ENCODE measurements at regions of chr11 and their contacts with region 1.

Region 1: GRCh38 chr11:113113801-113114706 is 152.8 kb downstream of the NCAM1 start:
- DNase-seq: peak; percentile 43 to 59
- ATAC-seq: peak; percentile 89 to 95 (median 92)
- H3K4me3 ChIP-seq: no peak overlapping the region
- H3K27ac ChIP-seq: peak overlapping the region in 9 of 10 donors; percentile 25 to 71 (median 51)
- H3K4me1 ChIP-seq: peaks cover under 1 to 74% (median 25%) of the 10 kb centered on the region in 9 donors
- H3K27me3 ChIP-seq: peaks cover 0 to 2% (median 0%) of the 10 kb centered on the region in 7 donors
- CTCF ChIP-seq: peak; percentile 41 to 80 (median 68)

Region 2: DNA sequence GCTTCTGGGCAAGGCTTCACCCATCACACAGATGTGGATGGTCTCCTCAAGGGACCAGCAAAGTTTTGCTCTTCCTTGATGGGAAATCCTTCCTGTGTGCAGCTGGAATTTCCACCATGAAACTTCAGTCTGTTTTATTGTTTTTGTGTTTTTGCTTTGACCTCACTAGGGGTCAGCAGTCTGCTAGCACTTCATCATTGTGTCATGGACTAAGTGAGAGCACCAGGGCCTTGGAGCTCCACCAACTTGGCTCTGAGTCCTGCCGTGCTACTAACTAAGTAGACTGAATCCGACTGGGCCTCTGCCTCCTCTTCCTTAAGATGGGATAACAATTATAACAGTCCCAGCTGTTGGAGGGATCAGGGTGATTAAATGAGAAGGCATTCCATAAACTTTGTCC is 458.7 kb before region 1 on chr11:
- intact Hi-C with region 1: loop called in 4 of 10 experiments (anchors 10 kb)
- DNase-seq: peak; percentile 74 to 87
- ATAC-seq: peak; percentile 55 to 87 (median 84)
- H3K4me3 ChIP-seq: no peak overlapping the region
- H3K27ac ChIP-seq: peak overlapping the region in 7 of 10 donors; percentile 17 to 72 (median 48)
- H3K4me1 ChIP-seq: peaks cover 8 to 67% (median 22%) of the 10 kb centered on the region in 9 donors
- H3K27me3 ChIP-seq: no peaks in the 10 kb centered on the region
- CTCF ChIP-seq: peak in 6 of 9 donors; percentile 8 to 47 (median 29)

Region 3: GRCh38 chr11:112777283-112777751 is 336.7 kb before region 1 on chr11:
- intact Hi-C with region 1: loop called in 2 of 10 experiments (anchors 10 kb)
- DNase-seq: no peak
- ATAC-seq: peak in 7 of 8 donors; percentile 2 to 65 (median 25)
- H3K4me3 ChIP-seq: no peak overlapping the region
- H3K27ac ChIP-seq: peak overlapping the region; percentile 47 to 86 (median 76)
- H3K4me1 ChIP-seq: peaks cover 10 to 50% (median 33%) of the 10 kb centered on the region in 9 donors
- H3K27me3 ChIP-seq: peaks cover 0 to 11% (median 0%) of the 10 kb centered on the region in 7 donors
- CTCF ChIP-seq: no peak

Region 4: DNA sequence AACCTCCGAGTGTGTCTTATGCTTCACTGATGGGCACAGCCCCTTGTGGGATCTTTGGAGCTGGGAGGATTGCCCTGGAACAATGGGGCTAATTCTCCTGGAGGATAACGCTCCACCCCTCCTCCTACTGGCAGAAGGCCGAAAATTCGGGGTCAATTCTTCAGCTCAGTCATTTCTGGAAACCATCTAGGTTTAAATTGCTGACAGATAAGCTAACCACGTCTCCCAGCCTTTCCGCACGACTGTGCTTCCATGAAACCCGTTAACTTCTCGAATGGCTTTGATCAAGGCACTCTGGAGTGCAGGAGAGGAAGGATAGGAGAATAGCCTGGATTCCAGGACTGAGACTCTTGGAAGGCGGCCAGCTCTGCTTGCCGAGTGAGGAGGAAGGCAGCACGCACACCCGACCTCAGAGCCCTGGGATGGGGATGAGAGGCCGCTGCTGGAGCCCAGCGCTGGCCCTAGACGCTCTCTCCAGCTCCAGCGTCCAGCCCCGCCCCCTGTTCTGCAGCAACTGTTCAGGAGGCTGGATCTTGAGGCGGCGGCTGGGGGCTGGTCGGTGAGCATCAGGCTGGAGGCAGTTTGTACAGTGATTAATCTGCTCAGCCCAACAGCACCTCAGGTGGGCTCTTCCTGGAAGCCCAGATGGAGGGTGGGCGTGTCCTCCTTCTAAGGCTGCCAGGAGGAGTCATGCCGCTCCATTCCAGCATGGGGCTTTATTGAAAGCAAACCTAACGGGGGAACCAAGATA is 329.6 kb before region 1 on chr11:
- intact Hi-C with region 1: loop called in 2 of 10 experiments (anchors 10 kb)
- DNase-seq: peak; percentile 67 to 68
- ATAC-seq: peak; percentile 61 to 88 (median 79)
- H3K4me3 ChIP-seq: peak overlapping the region in 8 of 10 donors; percentile 4 to 37 (median 22)
- H3K27ac ChIP-seq: peak overlapping the region; percentile 31 to 87 (median 70)
- H3K4me1 ChIP-seq: peaks cover 17 to 52% (median 45%) of the 10 kb centered on the region in 9 donors
- H3K27me3 ChIP-seq: peaks cover 0 to 5% (median 0%) of the 10 kb centered on the region in 7 donors
- CTCF ChIP-seq: peak in 1 of 9 donors; percentile 7

Region 5: GRCh38 chr11:112795142-112795815 is 318.8 kb before region 1 on chr11:
- intact Hi-C with region 1: loop called in 1 of 10 experiments (anchors 10 kb)
- DNase-seq: no peak
- ATAC-seq: peak in 5 of 8 donors; percentile 8 to 72 (median 41)
- H3K4me3 ChIP-seq: no peak overlapping the region
- H3K27ac ChIP-seq: peak overlapping the region in 2 of 10 donors; percentile 62
- H3K4me1 ChIP-seq: peaks cover 0 to 41% (median 12%) of the 10 kb centered on the region in 9 donors
- H3K27me3 ChIP-seq: no peaks in the 10 kb centered on the region
- CTCF ChIP-seq: peak; percentile 11 to 61 (median 51)

Region 6: DNA sequence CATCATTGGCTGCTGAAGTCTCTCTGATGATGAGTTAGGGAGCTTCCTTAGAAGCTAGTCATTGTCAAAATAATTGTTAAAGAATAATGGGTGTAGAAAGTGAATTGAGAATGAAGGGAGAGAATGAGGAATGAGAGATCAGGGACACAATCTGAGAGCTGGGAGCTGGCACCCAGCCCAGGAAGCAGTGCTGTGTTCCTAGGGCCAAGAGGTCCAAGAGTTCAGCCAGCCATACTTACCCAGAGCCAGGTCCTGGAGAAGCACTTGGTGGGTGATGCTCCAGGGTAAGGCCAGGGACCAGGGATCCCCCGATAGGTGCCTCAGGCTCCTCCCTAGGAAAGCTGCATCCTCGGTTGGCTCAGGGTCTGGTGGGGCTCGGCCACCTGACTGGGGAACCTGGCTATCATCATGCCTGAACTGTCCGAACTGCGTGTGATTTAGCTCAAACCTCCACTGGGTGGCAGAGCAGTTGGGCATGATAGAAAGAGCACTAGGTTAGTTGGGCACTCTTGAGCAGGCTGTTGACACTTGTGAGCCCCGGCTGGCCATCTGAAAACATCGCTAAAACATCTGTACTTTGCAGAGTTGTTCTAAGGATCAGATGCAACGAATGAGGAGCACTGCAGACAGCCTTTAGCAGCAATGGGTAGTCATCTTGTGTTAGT is 276.8 kb before region 1 on chr11:
- intact Hi-C with region 1: loop called in 2 of 10 experiments (anchors 10 kb)
- DNase-seq: peak; percentile 10 to 45
- ATAC-seq: peak; percentile 49 to 65 (median 63)
- H3K4me3 ChIP-seq: no peak overlapping the region
- H3K27ac ChIP-seq: peak overlapping the region in 1 of 10 donors; percentile 19
- H3K4me1 ChIP-seq: peaks cover 0 to 24% (median 10%) of the 10 kb centered on the region in 9 donors
- H3K27me3 ChIP-seq: no peaks in the 10 kb centered on the region
- CTCF ChIP-seq: peak in 7 of 9 donors; percentile 25 to 58 (median 43)

Region 7: DNA sequence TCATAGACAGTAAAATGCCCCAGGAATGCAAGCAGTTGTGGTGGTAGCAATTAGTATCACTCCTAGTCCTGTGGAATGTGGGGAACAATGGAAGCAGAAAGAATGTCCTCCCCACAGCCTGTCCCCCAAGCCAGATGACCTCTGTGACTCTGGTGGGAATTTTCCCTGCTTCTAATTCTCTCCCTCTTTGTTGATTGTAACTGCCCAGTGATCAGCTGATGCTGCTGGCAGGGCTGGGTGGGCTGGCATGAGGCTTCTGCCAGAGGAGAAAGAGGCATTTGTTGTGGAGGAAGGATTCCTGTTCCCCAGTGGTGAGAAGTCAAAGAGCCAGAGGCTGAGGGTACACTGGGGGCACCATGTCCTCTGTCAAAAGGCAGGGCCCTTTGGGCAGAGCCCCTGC is 269.5 kb before region 1 on chr11:
- intact Hi-C with region 1: loop called in 2 of 10 experiments (anchors 10 kb)
- DNase-seq: peak in 1 of 2 donors; percentile 13
- ATAC-seq: peak in 6 of 8 donors; percentile 33 to 72 (median 48)
- H3K4me3 ChIP-seq: no peak overlapping the region
- H3K27ac ChIP-seq: peak overlapping the region in 2 of 10 donors; percentile 19 to 35
- H3K4me1 ChIP-seq: peaks cover 0 to 7% (median 0%) of the 10 kb centered on the region in 9 donors
- H3K27me3 ChIP-seq: no peaks in the 10 kb centered on the region
- CTCF ChIP-seq: no peak

Measured in heart right ventricle (tissue), 16 donors.